ENCODE measurements at regions of chr5 and their contacts with region 1.

Region 1: GRCh38 chr5:163564321-163564938 is 59.0 kb downstream of the MAT2B start:
- DNase-seq: peak; percentile 77
- ATAC-seq: no peak
- H3K4me3 Mint-ChIP-seq: no peak overlapping the region
- H3K27ac Mint-ChIP-seq: no peak overlapping the region
- H3K4me1 Mint-ChIP-seq: peaks cover 23% of the 10 kb centered on the region
- H3K27me3 Mint-ChIP-seq: peaks cover 52% of the 10 kb centered on the region

Region 2: GRCh38 chr5:162703914-162704313 is 860.5 kb before region 1 on chr5:
- CTCF ChIA-PET with region 1: no interaction called
- POLR2A ChIA-PET with region 1: no interaction called
- intact Hi-C with region 1: no loop called
- DNase-seq: no peak
- ATAC-seq: no peak
- H3K4me3 Mint-ChIP-seq: no peak overlapping the region
- H3K27ac Mint-ChIP-seq: no peak overlapping the region
- H3K4me1 Mint-ChIP-seq: no peaks in the 10 kb centered on the region
- H3K27me3 Mint-ChIP-seq: no peaks in the 10 kb centered on the region

Region 3: GRCh38 chr5:163473635-163474243 is 90.7 kb before region 1 on chr5:
- CTCF ChIA-PET with region 1: no interaction called
- POLR2A ChIA-PET with region 1: no interaction called
- intact Hi-C with region 1: no loop called
- DNase-seq: no peak
- ATAC-seq: no peak
- H3K4me3 Mint-ChIP-seq: no peak overlapping the region
- H3K27ac Mint-ChIP-seq: no peak overlapping the region
- H3K4me1 Mint-ChIP-seq: peaks cover 6% of the 10 kb centered on the region
- H3K27me3 Mint-ChIP-seq: no peaks in the 10 kb centered on the region

Region 4: GRCh38 chr5:163695830-163696578 is 131.6 kb after region 1 on chr5:
- CTCF ChIA-PET with region 1: interaction called, 3 read pairs
- POLR2A ChIA-PET with region 1: no interaction called
- intact Hi-C with region 1: loop called in 1 of 2 experiments (anchors 10 kb)
- DNase-seq: peak; percentile 5
- ATAC-seq: peak; percentile 49
- H3K4me3 Mint-ChIP-seq: no peak overlapping the region
- H3K27ac Mint-ChIP-seq: no peak overlapping the region
- H3K4me1 Mint-ChIP-seq: no peaks in the 10 kb centered on the region
- H3K27me3 Mint-ChIP-seq: peaks cover 2% of the 10 kb centered on the region

Region 5: DNA sequence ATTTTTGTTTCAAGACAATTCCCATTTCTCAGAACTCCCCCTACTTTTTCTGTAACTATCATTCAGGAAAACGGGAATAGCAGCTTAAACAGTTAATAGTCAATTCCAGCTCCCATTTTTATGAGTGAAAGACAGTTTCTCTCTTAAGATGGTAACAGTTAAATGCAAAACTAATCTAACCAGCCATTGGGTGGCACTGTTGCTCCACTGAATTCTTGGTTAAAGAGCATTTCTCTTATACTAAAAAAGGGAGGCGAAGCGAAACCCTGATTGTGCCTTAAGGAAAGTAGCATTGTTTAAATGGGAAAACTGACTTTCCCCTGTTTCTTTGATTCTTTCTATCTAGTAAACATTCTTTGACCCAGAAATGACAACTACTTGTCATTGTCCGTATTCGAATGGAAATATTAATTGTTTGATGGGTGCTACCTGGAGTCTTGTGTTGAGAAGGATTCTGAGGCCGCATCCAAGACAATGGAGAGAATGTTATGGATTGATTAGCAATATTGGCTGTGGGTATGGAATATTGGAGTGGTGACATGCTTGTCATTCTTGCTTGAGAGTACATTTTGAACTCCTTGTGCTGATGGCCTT is 448.7 kb after region 1 on chr5:
- CTCF ChIA-PET with region 1: no interaction called
- POLR2A ChIA-PET with region 1: no interaction called
- intact Hi-C with region 1: loop called in 1 of 2 experiments (anchors 5 kb)
- DNase-seq: peak; percentile 50
- ATAC-seq: no peak
- H3K4me3 Mint-ChIP-seq: no peak overlapping the region
- H3K27ac Mint-ChIP-seq: no peak overlapping the region
- H3K4me1 Mint-ChIP-seq: no peaks in the 10 kb centered on the region
- H3K27me3 Mint-ChIP-seq: no peaks in the 10 kb centered on the region

Region 6: DNA sequence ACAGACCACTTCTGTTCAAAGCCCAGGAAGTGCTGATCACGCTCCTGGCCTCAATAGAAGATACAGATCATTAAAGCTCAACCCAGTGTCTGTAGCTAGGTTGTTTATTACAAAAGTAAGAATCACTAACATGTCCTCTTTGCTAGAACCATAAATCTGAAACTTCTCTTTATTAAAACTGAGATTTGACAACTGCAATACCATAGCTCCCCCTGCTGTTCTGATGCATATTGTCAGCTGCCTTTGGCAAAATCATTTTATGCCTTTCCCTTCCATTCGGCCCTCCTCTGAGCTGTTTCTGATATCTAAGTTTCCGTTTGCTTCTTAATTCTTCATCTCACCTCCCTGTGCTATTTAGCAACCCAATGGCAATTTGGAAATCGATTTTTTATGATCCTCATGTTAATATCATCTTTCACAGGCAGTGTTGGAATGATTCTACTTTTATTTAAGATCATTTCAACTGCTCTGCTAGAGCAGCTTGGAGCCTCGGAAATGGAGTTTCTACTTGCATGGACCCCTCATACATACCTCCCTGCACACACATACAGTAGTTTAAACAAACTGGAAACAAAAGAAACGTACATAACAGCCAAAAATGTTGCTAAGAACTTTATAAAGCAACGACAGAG is 939.8 kb after region 1 on chr5:
- CTCF ChIA-PET with region 1: interaction called, 21 read pairs
- POLR2A ChIA-PET with region 1: no interaction called
- intact Hi-C with region 1: loop called (anchors 1 kb)
- DNase-seq: peak; percentile 34
- ATAC-seq: no peak
- H3K4me3 Mint-ChIP-seq: no peak overlapping the region
- H3K27ac Mint-ChIP-seq: no peak overlapping the region
- H3K4me1 Mint-ChIP-seq: no peaks in the 10 kb centered on the region
- H3K27me3 Mint-ChIP-seq: no peaks in the 10 kb centered on the region

Region 7: DNA sequence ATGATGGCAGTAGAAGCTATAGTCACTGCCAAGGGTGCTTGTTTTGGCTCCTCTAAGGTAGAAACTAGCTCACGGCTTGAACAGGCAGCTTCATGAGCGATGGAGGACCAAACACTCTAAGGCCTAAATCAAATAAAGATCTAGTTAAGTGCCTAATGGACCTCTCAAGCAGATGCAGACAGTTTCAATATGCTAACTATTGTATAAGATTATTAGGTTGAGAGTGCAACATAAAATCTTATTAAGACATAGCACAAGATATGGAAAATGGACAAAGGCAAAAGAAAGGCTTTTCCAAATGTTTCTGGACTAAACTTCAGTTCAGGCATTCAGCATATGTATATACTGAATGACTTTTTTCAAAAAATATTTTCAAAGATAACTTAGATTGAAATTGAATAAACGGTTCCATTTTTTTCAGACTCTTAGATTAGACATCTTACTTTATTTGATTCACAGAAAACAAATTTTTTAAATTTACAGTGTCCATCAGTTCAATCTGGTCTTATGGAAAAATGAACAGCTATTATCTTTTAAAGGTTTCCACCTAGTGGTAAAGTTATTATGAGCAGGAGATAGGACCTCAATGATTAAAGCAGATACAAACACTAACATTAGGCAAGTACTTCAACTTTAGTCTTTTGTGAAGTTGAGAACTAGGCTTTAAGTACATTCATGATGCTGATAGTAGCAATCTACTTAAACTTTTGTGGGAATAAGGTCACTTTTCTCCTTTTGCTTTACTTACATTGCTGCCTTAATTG is 1108.7 kb after region 1 on chr5:
- CTCF ChIA-PET with region 1: no interaction called
- POLR2A ChIA-PET with region 1: no interaction called
- intact Hi-C with region 1: loop called in 1 of 2 experiments (anchors 5 kb)
- DNase-seq: no peak
- ATAC-seq: no peak
- H3K4me3 Mint-ChIP-seq: no peak overlapping the region
- H3K27ac Mint-ChIP-seq: no peak overlapping the region
- H3K4me1 Mint-ChIP-seq: no peaks in the 10 kb centered on the region
- H3K27me3 Mint-ChIP-seq: no peaks in the 10 kb centered on the region

Region 8: DNA sequence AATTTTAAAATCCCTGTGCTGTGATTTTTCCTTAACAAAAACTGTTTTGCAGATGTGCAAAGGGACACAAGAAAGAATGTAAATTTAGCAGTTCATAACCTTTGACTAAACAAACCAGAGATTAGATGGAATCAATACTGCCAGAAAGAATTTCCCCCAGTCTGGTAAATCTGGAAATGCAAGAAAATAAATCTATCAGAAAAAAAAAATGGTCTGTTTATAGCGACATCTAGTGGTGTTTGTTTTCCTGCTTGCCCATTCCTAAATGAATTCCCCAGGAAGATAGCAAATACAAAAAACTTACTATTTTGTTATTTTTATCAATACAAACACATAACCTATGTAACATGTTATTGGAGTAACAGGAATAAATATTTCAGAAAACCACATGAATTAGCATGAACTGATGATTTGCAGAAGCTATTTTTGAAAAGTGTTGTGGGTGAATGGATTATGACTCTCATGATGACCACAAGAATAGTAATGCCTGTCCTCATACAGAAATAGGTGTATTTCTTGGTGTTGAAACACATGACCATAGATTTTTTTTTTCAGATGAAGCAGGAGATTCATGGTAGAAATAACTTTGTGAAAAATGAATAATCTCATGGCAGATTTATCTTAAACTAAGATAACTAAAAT is 1644.8 kb after region 1 on chr5:
- CTCF ChIA-PET with region 1: no interaction called
- POLR2A ChIA-PET with region 1: no interaction called
- intact Hi-C with region 1: loop called in 1 of 2 experiments (anchors 1 kb)
- DNase-seq: no peak
- ATAC-seq: no peak
- H3K4me3 Mint-ChIP-seq: no peak overlapping the region
- H3K27ac Mint-ChIP-seq: no peak overlapping the region
- H3K4me1 Mint-ChIP-seq: no peaks in the 10 kb centered on the region
- H3K27me3 Mint-ChIP-seq: no peaks in the 10 kb centered on the region

Region 9: DNA sequence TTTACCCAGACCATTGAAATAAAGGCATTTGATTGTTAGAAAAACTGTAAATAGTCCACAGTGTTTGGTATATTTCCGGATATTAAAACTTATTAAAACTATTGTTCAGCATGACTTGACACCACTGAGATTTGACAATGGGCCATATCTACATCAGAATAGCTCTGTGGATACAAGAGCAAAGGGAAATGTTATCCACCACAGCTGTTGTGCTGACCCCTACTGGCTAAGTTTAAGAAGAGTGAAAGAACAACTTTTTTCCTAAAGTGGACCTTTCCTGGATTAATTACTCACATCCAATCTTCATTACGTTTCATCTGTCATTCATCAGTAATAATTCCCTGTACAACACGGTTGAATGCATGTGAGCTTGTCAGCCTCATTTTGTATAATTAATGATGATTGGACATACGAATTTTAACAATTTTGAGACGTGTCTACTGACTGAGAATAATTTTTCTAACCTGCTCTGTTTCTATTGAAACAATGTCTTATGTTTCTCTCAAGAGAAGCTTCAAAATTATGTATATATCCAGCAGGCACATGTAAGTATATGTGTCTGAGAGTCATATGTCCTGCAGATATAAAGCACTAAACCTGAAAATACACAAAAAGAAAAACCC is 1893.5 kb after region 1 on chr5:
- CTCF ChIA-PET with region 1: no interaction called
- POLR2A ChIA-PET with region 1: no interaction called
- intact Hi-C with region 1: loop called in 1 of 2 experiments (anchors 5 kb)
- DNase-seq: no peak
- ATAC-seq: no peak
- H3K4me3 Mint-ChIP-seq: no peak overlapping the region
- H3K27ac Mint-ChIP-seq: no peak overlapping the region
- H3K4me1 Mint-ChIP-seq: no peaks in the 10 kb centered on the region
- H3K27me3 Mint-ChIP-seq: no peaks in the 10 kb centered on the region

Measured in activated CD4-positive, alpha-beta T cell treated with anti-CD3 and anti-CD28 coated beads for 36 hours (primary cell).